ENCODE measurements at regions of chr6 and their contacts with region 1.

Region 1: DNA sequence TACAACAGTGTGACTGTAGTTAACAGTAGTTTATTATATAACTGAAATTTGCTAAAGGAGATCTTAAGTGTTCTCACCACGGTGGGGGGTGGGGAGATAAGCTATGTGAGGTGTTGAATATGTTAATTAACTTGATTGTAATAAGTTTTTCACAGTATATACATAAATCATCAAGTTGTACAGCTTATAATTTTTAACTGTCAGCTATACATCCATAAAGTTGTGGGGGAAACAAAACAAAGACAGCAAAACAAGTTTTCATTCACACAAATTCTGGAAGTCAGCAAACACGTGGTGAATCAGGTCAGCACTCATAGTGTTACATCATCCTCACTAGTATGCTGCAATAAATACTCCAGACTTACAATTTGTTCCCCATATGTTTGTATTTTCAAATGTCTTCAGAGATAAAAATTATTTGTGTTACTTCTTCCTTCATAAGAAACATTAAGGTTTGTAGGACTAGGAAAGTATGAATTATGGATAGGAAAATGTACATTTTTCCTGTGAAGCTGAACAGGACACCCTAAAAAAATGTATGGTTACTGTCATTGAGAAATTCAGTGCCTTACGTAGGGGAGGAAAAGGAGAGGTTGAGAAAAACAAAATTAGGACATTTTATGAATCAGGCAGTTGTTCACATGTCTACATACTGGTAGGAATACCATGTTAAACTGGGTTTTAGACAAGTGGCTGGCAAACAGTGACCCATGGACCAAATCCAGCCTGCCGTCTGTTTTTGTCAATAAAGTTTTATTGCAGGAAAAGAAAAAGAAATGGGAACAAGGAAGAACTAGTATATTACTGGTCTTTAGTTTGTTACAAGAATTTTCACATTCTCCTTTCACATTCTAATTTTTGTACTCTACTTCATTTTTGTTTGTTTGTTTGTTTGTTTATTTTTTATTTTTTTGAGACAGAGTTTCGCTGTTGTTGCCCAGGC is 6.0 kb downstream of the SUMO4 start:
- DNase-seq: no peak
- ATAC-seq: no peak
- H3K4me3 ChIP-seq: no peak overlapping the region
- H3K27ac ChIP-seq: no peak overlapping the region
- H3K4me1 ChIP-seq: peaks cover 14% of the 10 kb centered on the region
- H3K27me3 ChIP-seq: no peaks in the 10 kb centered on the region
- CTCF ChIP-seq: no peak

Region 2: GRCh38 chr6:149316798-149317655 is 89.1 kb before region 1 on chr6:
- intact Hi-C with region 1: loop called (anchors 5 kb)
- DNase-seq: peak; percentile 92 to 95
- ATAC-seq: peak; percentile 94 to 96 (median 95)
- H3K4me3 ChIP-seq: peak overlapping the region; percentile 97
- H3K27ac ChIP-seq: peak overlapping the region; percentile 97
- H3K4me1 ChIP-seq: peaks cover 23% of the 10 kb centered on the region
- H3K27me3 ChIP-seq: no peaks in the 10 kb centered on the region
- CTCF ChIP-seq: peak; percentile 13

Region 3: DNA sequence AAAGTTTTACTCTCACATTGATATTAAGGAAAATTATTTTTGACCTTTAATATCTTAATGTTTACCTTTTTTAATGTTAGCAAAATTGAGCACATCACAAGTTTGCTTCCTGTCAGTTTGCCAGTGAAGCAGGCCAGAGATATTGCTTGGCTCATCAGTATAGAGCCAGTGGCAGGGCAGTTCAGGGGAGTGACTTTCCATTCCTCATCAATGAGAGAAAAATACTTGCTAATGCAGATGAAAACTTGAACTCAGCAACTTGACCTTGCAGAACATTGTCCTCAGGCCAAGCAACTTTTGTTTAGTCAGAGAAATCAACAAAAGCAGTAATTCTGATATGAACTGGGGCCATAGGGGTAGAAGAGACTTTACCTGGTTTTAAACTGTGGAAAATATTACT is 81.7 kb before region 1 on chr6:
- intact Hi-C with region 1: loop called (anchors 5 kb)
- DNase-seq: no peak
- ATAC-seq: no peak
- H3K4me3 ChIP-seq: no peak overlapping the region
- H3K27ac ChIP-seq: no peak overlapping the region
- H3K4me1 ChIP-seq: peaks cover 66% of the 10 kb centered on the region
- H3K27me3 ChIP-seq: no peaks in the 10 kb centered on the region
- CTCF ChIP-seq: no peak

Measured in psoas muscle (tissue), 8 donors.